ENCODE measurements at regions of chr10 and their contacts with region 1.

Region 1: GRCh38 chr10:22988581-22989360 is 60.9 kb downstream of the ARMC3 start:
- DNase-seq: peak in 3 of 5 donors; percentile 30 to 55 (median 43)
- ATAC-seq: peak in 3 of 4 donors; percentile 79 to 86 (median 83)
- H3K4me3 ChIP-seq: peak overlapping the region in 1 of 12 donors; percentile 25
- H3K27ac ChIP-seq: no peak overlapping the region
- H3K4me1 ChIP-seq: peaks cover 0 to 10% (median 0%) of the 10 kb centered on the region in 12 donors
- H3K27me3 ChIP-seq: peaks cover 0 to 11% (median 0%) of the 10 kb centered on the region in 9 donors
- CTCF ChIP-seq: peak; percentile 83 to 97 (median 92)
- POLR2A ChIP-seq: no peak

Region 2: GRCh38 chr10:21078410-21079329 is 1910.1 kb before region 1 on chr10:
- intact Hi-C with region 1: loop called in 1 of 10 experiments (anchors 2 kb)
- DNase-seq: peak in 4 of 5 donors; percentile 62 to 67 (median 65)
- ATAC-seq: peak; percentile 73 to 91 (median 79)
- H3K4me3 ChIP-seq: no peak overlapping the region
- H3K27ac ChIP-seq: peak overlapping the region in 6 of 12 donors; percentile 9 to 68 (median 49)
- H3K4me1 ChIP-seq: peaks cover 0 to 11% (median 0%) of the 10 kb centered on the region in 12 donors
- H3K27me3 ChIP-seq: no peaks in the 10 kb centered on the region
- CTCF ChIP-seq: peak; percentile 60 to 88 (median 77)
- POLR2A ChIP-seq: no peak

Region 3: GRCh38 chr10:22010973-22011408 is 977.8 kb before region 1 on chr10:
- intact Hi-C with region 1: loop called in 8 of 10 experiments (anchors 2 to 5 kb)
- DNase-seq: no peak
- ATAC-seq: no peak
- H3K4me3 ChIP-seq: no peak overlapping the region
- H3K27ac ChIP-seq: no peak overlapping the region
- H3K4me1 ChIP-seq: peaks cover 0 to 3% (median 0%) of the 10 kb centered on the region in 12 donors
- H3K27me3 ChIP-seq: no peaks in the 10 kb centered on the region
- CTCF ChIP-seq: peak; percentile 42 to 75 (median 62)
- POLR2A ChIP-seq: no peak

Region 4: DNA sequence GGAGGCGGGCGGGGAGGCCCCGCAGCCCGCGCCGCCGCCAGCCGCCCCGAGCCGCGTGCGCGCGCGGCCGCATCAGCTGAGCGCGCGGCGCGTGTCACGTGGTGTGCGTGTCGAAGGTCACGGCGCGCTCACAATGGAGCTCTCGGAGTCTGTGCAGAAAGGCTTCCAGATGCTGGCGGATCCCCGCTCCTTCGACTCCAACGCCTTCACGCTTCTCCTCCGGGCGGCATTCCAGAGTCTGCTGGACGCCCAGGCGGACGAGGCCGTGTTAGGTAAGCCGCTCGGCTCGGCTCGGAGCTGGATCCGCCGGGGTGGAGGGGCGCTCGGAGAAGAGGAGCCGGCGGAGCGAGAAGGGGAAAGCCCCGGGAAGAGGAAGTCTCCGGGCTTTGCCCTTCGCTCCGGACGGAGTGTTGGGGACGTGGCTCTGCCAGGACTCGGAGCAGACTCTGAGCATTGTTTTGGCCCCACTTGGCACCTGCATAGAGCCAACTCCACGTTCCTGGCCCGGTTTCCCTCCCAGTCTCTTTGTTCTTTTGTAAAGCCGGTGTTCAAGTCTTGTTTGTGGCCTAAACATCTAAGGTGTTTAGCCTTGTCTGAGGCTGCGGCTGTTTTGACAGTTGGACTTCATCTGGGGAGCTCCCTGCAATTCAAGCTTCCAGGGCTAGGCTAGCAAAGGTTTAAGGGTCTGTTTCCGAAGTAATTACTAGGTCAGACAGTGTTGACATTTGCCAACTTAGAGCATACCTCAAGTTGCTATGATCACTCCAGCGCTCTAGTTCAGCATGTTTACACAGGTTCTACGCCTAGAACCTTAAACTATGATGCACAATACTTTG is 672.3 kb before region 1 on chr10 and contains the start of gene COMMD3:
- intact Hi-C with region 1: loop called in 4 of 10 experiments (anchors 10 kb)
- DNase-seq: peak; percentile 90 to 94 (median 91)
- ATAC-seq: peak; percentile 89 to 93 (median 91)
- H3K4me3 ChIP-seq: peak within 1 kb of the TSS; percentile 66 to 85 (median 79)
- H3K27ac ChIP-seq: peak within 1 kb of the TSS; percentile 71 to 98 (median 95)
- H3K4me1 ChIP-seq: peaks cover 0 to 42% (median 28%) of the 10 kb centered on the region in 12 donors
- H3K27me3 ChIP-seq: no peaks in the 10 kb centered on the region
- CTCF ChIP-seq: no peak
- POLR2A ChIP-seq: peak in 1 of 2 donors; percentile 81
- total RNA-seq, gene COMMD3: 44.4 to 88.3 (median 74.1) TPM

Region 5: DNA sequence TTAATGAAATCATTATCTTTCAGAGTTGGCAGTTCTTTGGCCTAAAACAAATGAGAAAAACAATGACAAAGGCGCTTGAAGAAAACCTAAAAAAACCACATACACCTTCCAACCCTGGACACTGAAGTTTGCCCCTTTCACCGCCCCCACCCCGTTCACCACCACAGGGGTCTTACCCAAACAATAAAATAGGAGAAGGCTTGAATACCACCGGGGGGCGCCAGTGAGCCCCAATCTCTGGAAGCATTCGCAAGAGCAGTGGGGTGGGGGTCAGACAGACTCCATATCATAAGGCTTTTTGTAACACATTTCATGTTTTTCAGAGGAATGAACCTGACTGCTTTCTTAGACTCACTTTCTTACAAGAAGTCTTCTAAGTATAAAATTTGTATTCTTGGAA is 438.0 kb before region 1 on chr10:
- intact Hi-C with region 1: loop called in 2 of 10 experiments (anchors 5 kb)
- DNase-seq: peak in 4 of 5 donors; percentile 25 to 74 (median 39)
- ATAC-seq: no peak
- H3K4me3 ChIP-seq: no peak overlapping the region
- H3K27ac ChIP-seq: no peak overlapping the region
- H3K4me1 ChIP-seq: peaks cover 0 to 13% (median 0%) of the 10 kb centered on the region in 12 donors
- H3K27me3 ChIP-seq: no peaks in the 10 kb centered on the region
- CTCF ChIP-seq: peak; percentile 36 to 63 (median 54)
- POLR2A ChIP-seq: no peak

Region 6: GRCh38 chr10:23067939-23068775 is 79.4 kb after region 1 on chr10:
- intact Hi-C with region 1: loop called in 5 of 10 experiments (anchors 2 to 5 kb)
- DNase-seq: peak; percentile 59 to 83 (median 66)
- ATAC-seq: peak; percentile 25 to 73 (median 68)
- H3K4me3 ChIP-seq: no peak overlapping the region
- H3K27ac ChIP-seq: no peak overlapping the region
- H3K4me1 ChIP-seq: peaks cover 0 to 23% (median 10%) of the 10 kb centered on the region in 12 donors
- H3K27me3 ChIP-seq: no peaks in the 10 kb centered on the region
- CTCF ChIP-seq: peak; percentile 70 to 90 (median 82)
- POLR2A ChIP-seq: no peak